Activated B cell treated with CpG ODN at 0.5 μM for 24 hours (primary cell): ENCODE measurements at regions of chr5 and their contacts with region 1.

Region 1: DNA sequence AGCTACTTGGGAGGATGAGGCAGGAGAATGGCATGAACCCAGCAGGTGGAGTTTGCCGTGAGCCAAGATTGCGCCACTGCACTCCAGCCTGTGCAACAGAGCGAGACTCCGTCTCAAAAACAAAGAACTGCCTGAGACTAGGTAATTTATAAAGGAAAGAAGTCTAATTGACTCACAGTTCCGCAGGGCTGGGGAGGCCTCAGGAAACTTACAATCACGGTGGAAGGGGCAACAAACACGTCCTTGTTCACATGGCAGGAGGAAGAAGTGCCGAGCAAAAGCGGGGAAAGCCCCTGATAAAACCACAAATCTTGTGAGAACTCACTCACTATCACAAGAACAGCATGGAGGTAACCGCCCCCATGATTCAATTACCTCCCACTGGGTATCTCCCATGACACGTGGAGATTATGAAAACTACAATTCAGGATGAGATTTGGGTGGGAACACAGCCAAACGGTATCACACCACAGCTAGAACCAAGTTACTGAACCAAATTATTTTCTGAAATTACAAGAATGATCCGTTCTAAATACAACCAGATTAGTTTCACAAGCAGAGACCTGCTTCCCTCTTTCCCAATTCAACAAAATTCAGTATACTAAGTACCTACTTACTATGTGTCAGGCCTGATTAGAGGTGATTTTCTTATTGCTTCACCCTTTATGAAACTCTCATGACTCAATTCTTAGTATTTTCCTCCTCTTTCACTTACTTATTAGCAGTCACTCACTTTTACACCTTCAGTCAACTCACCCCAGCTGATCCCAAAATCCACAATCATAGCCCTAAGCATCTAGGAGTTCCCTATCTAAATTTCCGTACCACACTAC is 8.4 kb downstream of the UBTD2 start:
- DNase-seq: peak; percentile 25
- ATAC-seq: peak; percentile 92
- H3K4me3 Mint-ChIP-seq: peak overlapping the region; percentile 44
- H3K27ac Mint-ChIP-seq: peak overlapping the region; percentile 76
- H3K4me1 Mint-ChIP-seq: peaks cover 38% of the 10 kb centered on the region
- H3K27me3 Mint-ChIP-seq: no peaks in the 10 kb centered on the region
- CTCF ChIP-seq: no peak

Region 2: DNA sequence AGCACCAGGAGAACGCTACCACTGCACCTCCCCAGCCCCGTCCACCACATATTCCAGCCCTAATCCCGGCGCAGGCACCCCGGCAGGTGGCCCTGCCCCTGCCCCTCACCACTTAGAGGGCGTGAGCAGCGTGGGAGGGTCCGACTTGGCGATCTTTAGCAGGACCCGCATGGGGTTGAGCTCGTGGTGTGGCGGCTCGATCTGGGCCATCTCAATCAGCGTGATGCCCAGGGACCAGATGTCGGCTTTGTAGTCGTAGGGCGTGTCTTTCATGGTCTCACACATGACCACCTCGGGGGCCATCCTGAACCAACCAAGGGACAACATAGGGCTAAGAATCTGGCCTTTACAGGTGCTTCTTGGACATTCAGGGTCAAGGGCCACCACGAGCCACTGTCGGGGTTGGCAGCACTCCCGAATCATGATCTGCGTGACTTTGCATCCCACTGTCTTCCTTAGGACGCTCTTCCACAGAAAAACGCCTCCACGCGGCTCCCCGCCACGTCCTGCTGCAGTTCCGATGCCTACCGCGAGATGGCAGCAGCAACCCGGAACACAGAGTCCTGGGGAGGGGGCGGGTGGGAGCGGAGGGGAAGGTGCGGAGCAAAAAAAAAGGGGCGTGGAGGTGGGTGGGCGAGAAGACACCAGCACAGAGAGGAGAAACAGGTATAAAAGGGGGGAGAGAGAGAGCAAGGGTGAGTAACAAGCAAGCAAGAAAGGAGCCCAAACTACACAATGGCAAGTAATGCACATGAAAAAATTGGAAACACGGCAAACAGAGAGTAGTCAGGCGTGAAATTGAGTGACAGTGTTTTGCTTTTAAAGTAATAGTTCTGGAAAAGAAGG is 168.4 kb before region 1 on chr5:
- CTCF ChIA-PET with region 1: no interaction called
- POLR2A ChIA-PET with region 1: no interaction called
- intact Hi-C with region 1: loop called (anchors 1 kb)
- DNase-seq: peak; percentile 71
- ATAC-seq: no peak
- H3K4me3 Mint-ChIP-seq: no peak overlapping the region
- H3K27ac Mint-ChIP-seq: peak overlapping the region; percentile 68
- H3K4me1 Mint-ChIP-seq: peaks cover 41% of the 10 kb centered on the region
- H3K27me3 Mint-ChIP-seq: no peaks in the 10 kb centered on the region
- CTCF ChIP-seq: peak; percentile 34